Right lobe of liver (tissue), 6 donors: ENCODE measurements at regions of chr22 and their contacts with region 1.

Region 1: GRCh38 chr22:20156611-20157429 is 6.0 kb upstream of the CCDC188 start:
- DNase-seq: peak; percentile 81 to 88 (median 86)
- ATAC-seq: peak; percentile 82 to 97 (median 92)
- H3K4me3 ChIP-seq: no peak overlapping the region
- H3K27ac ChIP-seq: no peak overlapping the region
- H3K4me1 ChIP-seq: no peaks in the 10 kb centered on the region
- H3K27me3 ChIP-seq: no peaks in the 10 kb centered on the region
- CTCF ChIP-seq: peak; percentile 97 to 100 (median 98)
- POLR2A ChIP-seq: no peak

Region 2: DNA sequence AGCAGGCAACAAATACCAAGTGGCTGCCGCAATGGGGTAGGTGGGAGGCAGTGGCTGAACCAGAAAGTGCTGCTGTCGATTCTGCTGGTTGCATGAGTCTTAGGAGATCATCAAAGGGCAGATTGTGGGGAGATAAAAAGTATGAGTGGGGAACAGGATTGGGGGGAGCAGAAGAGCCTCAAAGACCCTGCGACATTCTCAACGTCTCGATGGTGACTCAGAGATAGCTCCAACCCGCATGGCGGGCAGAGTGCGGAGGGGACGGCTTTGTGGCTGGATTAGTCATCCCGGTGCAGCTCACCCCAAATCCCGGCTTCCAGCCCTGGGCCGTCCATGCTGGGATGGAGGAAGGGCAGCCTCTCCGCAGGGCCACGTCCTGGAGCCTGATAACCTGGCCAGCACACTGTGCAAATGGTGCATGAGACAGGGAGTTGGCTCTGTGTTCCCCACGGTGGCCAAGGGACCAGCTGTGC is 122.9 kb after region 1 on chr22:
- intact Hi-C with region 1: loop called (anchors 5 kb)
- DNase-seq: no peak
- ATAC-seq: no peak
- H3K4me3 ChIP-seq: no peak overlapping the region
- H3K27ac ChIP-seq: no peak overlapping the region
- H3K4me1 ChIP-seq: no peaks in the 10 kb centered on the region
- H3K27me3 ChIP-seq: no peaks in the 10 kb centered on the region
- CTCF ChIP-seq: no peak
- POLR2A ChIP-seq: no peak